ENCODE measurements at regions of chr22 and their contacts with region 1.

Region 1: DNA sequence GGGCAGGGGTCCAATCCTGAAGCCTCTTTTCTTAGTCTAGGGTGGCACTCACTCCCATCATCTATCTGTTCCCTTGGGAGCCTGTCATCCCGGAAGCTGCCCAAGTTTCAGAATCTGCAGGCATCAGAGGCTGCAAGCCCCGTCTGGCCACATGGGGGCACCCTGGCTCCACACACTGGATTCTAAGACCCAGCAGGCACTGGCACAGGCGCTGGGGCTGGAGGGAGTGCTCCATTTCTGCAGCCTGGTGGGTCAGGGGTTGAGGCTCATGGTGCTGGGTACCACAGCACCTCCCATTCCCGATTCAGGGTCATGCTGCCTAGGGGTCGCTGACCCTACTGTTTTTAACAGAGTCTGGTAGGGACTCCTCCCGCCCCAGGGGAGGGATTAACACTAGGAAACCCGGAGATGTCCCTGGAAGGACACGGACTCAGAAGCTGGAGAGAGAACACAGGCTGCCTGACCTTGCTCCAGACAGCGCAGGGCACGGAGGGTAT is 243.9 kb upstream of the SYN3 start:
- DNase-seq: peak; percentile 77 to 89 (median 83)
- ATAC-seq: peak; percentile 83 to 91 (median 88)
- H3K4me3 ChIP-seq: peak overlapping the region in 5 of 12 donors; percentile 3 to 25 (median 11)
- H3K27ac ChIP-seq: peak overlapping the region in 8 of 12 donors; percentile 4 to 75 (median 65)
- H3K4me1 ChIP-seq: peaks cover 0 to 33% (median 10%) of the 10 kb centered on the region in 12 donors
- H3K27me3 ChIP-seq: no peaks in the 10 kb centered on the region
- CTCF ChIP-seq: peak; percentile 87 to 98 (median 94)
- POLR2A ChIP-seq: no peak

Region 2: GRCh38 chr22:33038131-33038772 is 263.8 kb before region 1 on chr22:
- intact Hi-C with region 1: no loop called
- DNase-seq: peak in 1 of 5 donors; percentile 42
- ATAC-seq: peak in 3 of 4 donors; percentile 34 to 80 (median 48)
- H3K4me3 ChIP-seq: no peak overlapping the region
- H3K27ac ChIP-seq: no peak overlapping the region
- H3K4me1 ChIP-seq: peaks cover 0 to 6% (median 0%) of the 10 kb centered on the region in 12 donors
- H3K27me3 ChIP-seq: peaks cover 0 to 45% (median 5%) of the 10 kb centered on the region in 9 donors
- CTCF ChIP-seq: no peak
- POLR2A ChIP-seq: no peak

Region 3: DNA sequence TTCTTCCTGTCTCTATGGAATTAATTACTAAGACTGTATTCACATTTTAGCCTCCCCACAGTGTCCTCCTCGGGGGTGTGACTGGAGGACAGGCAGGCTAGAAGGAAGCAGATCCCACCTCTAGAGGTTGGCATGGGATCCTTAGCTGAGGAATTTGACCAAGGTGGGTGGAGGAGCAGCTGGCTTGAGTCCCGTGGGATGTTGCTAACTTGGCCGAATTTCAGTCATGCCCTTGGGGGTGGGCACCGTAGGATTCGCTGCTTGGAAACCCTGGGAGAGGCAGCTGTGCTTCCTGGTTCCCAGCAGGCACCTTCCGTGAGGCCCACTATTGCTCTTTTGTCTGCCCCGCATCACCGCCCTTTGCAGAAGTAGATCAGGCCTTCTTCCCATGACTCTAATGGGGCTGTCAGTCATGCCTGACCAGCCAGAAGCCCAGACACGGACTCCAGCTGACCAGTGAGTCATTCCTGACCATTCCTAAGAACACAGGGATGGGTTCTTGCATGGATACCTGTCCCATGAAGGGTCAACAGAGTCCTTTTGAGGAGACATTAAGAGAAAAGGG is 48.4 kb after region 1 on chr22:
- intact Hi-C with region 1: no loop called
- DNase-seq: no peak
- ATAC-seq: no peak
- H3K4me3 ChIP-seq: no peak overlapping the region
- H3K27ac ChIP-seq: no peak overlapping the region
- H3K4me1 ChIP-seq: peaks cover 0 to 18% (median 2%) of the 10 kb centered on the region in 12 donors
- H3K27me3 ChIP-seq: no peaks in the 10 kb centered on the region
- CTCF ChIP-seq: no peak
- POLR2A ChIP-seq: no peak

Region 4: DNA sequence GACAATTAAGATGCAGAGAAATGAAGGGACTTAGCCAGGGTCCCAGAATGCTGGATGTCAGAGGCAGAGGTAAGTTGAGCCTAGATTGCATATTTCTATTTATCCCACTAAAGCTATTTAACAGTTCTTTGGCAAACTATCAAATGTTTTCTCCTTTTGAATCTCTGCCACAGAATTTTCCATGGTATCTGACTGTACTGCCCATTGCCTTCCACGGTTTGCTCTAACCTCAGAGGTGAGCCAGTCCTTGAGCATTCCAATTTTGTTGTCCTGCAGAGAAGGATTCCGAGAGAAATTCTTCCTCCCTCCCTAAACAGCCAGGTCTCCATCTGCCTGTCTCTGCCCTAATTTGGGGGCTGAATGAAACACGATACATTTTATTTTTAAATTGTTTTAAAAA is 124.4 kb after region 1 on chr22:
- intact Hi-C with region 1: loop called in 1 of 10 experiments (anchors 10 kb)
- DNase-seq: no peak
- ATAC-seq: peak in 1 of 4 donors; percentile 41
- H3K4me3 ChIP-seq: no peak overlapping the region
- H3K27ac ChIP-seq: no peak overlapping the region
- H3K4me1 ChIP-seq: peaks cover 0 to 15% (median 0%) of the 10 kb centered on the region in 12 donors
- H3K27me3 ChIP-seq: no peaks in the 10 kb centered on the region
- CTCF ChIP-seq: no peak
- POLR2A ChIP-seq: no peak

Region 5: DNA sequence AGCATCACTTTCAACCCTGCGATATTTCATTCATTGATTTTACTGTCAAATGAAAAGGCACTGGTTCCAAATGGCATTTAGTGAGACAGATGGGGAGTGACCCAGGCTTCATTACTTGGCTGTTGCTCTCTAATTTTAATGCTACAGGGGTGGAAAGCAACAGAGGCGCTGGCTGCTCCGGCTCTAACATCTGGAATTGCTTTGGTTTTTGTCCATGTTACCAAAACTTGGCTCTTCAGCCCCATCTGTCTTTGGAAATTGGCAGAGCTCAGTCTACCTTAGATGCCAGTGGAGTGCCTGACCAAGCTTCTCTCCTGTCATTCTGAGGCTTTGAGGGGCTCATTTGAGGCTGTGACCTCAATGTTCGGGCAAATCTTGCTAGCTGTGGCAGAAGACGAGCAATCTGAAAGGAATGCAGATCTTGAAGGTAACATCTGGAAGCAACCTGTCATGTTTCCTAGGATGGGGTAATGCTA is 165.6 kb after region 1 on chr22:
- intact Hi-C with region 1: loop called in 2 of 10 experiments (anchors 5 kb)
- DNase-seq: no peak
- ATAC-seq: peak in 1 of 4 donors; percentile 14
- H3K4me3 ChIP-seq: no peak overlapping the region
- H3K27ac ChIP-seq: peak overlapping the region in 2 of 12 donors; percentile 22 to 29
- H3K4me1 ChIP-seq: peaks cover 0 to 39% (median 21%) of the 10 kb centered on the region in 12 donors
- H3K27me3 ChIP-seq: no peaks in the 10 kb centered on the region
- CTCF ChIP-seq: peak in 5 of 12 donors; percentile 16 to 39 (median 28)
- POLR2A ChIP-seq: no peak

Region 6: GRCh38 chr22:33519071-33519973 is 217.2 kb after region 1 on chr22:
- intact Hi-C with region 1: loop called in 9 of 10 experiments (anchors 2 to 10 kb)
- DNase-seq: peak in 4 of 5 donors; percentile 29 to 54 (median 37)
- ATAC-seq: peak; percentile 37 to 69 (median 55)
- H3K4me3 ChIP-seq: no peak overlapping the region
- H3K27ac ChIP-seq: peak overlapping the region in 1 of 12 donors; percentile 19
- H3K4me1 ChIP-seq: peaks cover 0 to 23% (median 11%) of the 10 kb centered on the region in 12 donors
- H3K27me3 ChIP-seq: no peaks in the 10 kb centered on the region
- CTCF ChIP-seq: peak; percentile 38 to 82 (median 70)
- POLR2A ChIP-seq: no peak

Region 7: GRCh38 chr22:33747576-33748180 is 445.6 kb after region 1 on chr22:
- intact Hi-C with region 1: loop called in 1 of 10 experiments (anchors 10 kb)
- DNase-seq: peak in 2 of 5 donors; percentile 27 to 47
- ATAC-seq: peak in 3 of 4 donors; percentile 11 to 37 (median 21)
- H3K4me3 ChIP-seq: no peak overlapping the region
- H3K27ac ChIP-seq: no peak overlapping the region
- H3K4me1 ChIP-seq: peaks cover 0 to 33% (median 8%) of the 10 kb centered on the region in 12 donors
- H3K27me3 ChIP-seq: no peaks in the 10 kb centered on the region
- CTCF ChIP-seq: peak in 1 of 12 donors; percentile 12
- POLR2A ChIP-seq: no peak

Region 8: GRCh38 chr22:34111210-34111824 is 809.2 kb after region 1 on chr22:
- intact Hi-C with region 1: loop called in 9 of 10 experiments (anchors 2 to 5 kb)
- DNase-seq: peak in 3 of 5 donors; percentile 8 to 26 (median 18)
- ATAC-seq: peak in 3 of 4 donors; percentile 41 to 76 (median 69)
- H3K4me3 ChIP-seq: no peak overlapping the region
- H3K27ac ChIP-seq: no peak overlapping the region
- H3K4me1 ChIP-seq: no peaks in the 10 kb centered on the region
- H3K27me3 ChIP-seq: peaks cover 0 to 10% (median 0%) of the 10 kb centered on the region in 9 donors
- CTCF ChIP-seq: peak; percentile 56 to 75 (median 62)
- POLR2A ChIP-seq: no peak